HEK293T (cell line): ENCODE measurements at regions of chrX and their contacts with region 1.

Region 1: DNA sequence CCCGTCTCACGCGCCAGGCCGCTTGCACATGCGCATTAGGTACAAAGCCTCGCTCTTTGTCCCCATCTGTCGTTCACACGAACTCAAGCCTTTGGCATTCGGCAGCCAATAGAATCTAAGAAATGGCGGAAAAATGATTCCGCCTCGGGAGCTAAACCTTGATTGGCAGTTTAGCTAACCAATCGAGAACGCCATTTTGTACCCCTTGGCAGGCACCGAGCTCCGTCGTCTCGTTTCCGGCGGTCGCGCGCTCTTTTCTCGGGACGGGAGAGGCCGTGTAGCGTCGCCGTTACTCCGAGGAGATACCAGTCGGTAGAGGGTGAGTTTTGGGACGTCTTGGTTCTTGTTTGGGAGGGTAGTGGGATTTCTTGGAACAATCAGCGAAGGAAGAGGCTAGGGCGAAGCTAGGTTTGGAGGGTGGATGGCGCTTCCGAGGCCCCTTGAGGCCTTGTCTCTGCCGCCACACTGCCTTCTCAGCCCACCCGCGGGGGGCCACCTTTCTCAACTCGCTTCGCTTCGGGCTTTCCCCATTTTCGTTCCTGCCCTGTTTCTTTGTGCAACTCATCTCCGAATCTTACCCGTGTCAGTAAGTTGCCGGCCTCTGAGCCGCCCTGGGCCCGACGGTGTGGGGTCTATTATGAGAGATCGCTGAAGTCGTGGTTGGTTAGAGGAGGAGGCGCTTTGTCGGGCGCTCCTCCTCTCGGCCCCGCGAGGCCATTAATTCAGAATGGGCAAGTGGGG is at the start of gene NONO:
- DNase-seq: peak; percentile 88

Region 2: GRCh38 chrX:71171110-71171801 is 112.3 kb before region 1 on chrX:
- CTCF ChIA-PET with region 1: no interaction called
- POLR2A ChIA-PET with region 1: no interaction called
- DNase-seq: no peak

Region 3: GRCh38 chrX:71181910-71182799 is 101.4 kb before region 1 on chrX:
- CTCF ChIA-PET with region 1: no interaction called
- POLR2A ChIA-PET with region 1: interaction called, 26 read pairs
- DNase-seq: peak; percentile 88

Region 4: DNA sequence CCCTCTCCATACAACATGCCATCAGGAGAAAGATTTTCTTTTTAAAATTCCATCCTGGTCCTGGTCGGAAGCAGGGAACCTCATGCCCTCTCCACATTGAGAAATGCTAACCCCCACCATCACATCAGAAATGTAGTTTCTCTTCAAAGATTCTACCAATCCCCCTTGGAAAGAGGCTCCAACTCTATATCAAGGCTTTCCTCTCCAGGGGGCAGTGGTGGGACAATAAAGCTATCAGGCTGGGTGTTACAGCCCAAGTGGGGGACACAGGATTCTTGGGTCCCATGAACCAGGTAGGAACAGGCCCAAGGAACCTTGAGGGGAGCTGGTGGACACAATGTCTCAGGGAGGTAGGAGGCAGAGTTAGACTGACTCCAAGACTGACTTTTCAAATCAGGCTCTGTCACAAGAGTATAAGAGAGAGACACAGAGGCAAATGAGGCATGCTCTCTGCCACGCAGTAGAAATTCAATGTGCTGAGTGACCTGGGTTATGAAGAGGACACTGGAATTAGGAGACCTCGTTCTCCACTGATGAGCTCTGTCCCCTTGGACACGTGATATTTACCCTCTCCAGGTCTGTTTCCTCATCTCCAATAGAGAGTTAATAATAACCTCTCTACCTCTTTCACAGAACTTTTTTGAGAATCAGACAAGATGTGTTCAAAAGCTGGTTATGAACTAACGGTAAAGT is 56.1 kb before region 1 on chrX:
- CTCF ChIA-PET with region 1: no interaction called
- POLR2A ChIA-PET with region 1: no interaction called
- DNase-seq: no peak

Region 5: DNA sequence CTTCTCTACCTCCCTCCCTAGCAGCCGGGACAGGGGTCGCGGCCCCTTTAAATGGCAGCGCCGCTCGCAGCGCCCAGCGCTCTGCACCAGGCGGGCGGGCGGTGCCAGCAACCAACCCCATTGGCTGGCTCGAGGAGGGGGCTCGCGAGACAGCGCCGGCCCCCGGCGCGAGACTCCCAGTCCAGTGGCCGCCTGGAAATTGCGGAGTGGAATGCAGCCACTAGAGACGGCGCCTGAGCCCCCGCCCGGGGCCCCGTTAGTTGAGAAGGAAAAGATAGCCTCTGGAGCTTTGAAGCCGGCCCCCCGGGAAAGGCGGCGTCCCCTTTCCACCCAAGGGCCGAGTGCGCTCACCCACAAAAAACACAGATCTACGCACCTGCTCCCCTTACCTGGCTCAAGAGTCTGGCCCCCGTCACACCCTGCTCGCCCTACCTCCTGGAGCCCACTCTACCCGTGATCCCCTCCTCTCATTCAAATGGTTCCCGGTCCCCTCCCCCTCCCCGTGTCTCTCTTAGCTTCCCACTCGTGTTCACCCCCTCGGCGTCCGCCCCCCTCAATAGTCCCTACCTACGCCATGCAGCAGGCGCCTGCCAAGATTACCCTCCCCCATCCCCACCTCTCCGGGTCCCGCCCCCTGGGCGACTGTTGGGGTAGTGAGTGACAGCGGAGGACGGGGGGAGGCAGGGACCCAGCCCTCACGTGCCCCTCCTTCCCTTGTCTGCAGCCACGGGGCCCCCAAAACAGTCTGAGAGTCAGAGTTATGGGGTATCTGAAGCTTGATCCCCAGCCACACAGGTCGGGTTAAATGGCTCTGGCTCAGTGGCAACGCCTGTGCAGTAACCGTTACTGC is 29.3 kb before region 1 on chrX and contains the start of gene ZMYM3:
- CTCF ChIA-PET with region 1: no interaction called
- POLR2A ChIA-PET with region 1: interaction called, 42 read pairs
- DNase-seq: peak; percentile 91

Region 6: DNA sequence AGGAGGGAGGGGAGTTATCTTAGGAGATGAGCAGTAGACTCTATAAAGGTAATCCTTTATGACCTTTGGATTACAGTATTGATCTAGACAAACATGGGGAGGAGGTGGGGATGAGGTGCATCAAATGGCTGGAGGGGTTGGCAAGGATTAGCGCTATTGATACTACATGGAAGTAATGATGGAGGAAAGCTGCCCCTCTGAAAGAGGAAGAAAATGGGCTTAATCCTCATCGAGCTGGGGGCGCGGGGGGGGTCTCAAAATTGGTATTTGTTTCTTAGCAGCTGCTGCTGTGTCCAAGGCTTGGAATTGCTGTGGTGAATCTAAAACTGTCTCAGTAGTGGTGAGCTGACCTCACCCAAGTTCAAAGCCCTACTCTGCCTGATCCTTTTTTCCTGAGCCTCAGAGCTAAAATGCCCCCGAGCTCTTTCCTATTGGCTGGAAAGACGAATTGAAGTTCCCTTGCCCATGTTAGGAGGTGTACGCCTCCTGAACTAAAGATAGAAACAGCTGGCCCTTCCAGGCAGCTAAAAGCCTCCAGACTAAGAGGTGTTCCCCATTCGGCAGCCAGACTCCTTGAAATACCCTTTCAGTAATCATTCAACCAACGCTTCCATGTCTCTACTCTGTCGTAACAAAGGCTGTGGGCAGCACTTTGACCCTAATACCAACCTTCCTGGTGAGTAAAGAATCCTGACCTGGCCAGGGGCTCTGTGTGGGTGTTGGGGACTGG is 17.8 kb after region 1 on chrX and contains the start of gene ITGB1BP2:
- CTCF ChIA-PET with region 1: no interaction called
- POLR2A ChIA-PET with region 1: interaction called, 19 read pairs
- DNase-seq: no peak

Region 7: GRCh38 chrX:71365876-71366673 is 82.5 kb after region 1 on chrX and contains the start of gene TAF1:
- CTCF ChIA-PET with region 1: no interaction called
- POLR2A ChIA-PET with region 1: interaction called, 16 read pairs
- DNase-seq: peak; percentile 90